ENCODE measurements at regions of chr1 and their contacts with region 1.

Region 1: DNA sequence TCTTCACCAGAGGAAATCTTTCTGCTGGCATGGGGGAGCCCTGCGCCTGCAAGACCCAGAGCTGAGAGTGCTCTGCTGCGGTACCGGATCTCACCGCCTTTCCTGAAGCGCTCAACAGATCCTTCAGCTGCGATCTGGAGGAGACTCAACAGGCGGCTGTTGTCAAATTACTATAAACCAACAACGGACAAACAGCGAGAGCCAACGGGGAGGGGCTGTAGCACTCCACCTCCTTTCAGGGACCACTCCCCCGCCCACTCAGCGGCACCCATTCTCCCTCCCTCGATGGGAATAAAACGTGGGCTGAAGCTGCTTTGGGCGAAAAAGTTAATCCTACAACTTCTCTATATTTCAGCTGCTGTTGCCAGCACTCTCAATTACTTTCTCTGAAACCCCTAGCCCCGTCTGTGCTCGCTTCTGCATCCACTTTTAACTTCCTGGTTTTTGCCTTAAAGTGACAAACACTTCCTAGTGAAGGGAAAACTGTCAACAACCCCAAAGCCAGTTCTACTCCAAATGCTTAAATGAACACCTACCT is at the start of gene FMO5:
- DNase-seq: peak; percentile 55
- H3K4me3 Mint-ChIP-seq: peak within 1 kb of the TSS; percentile 78
- H3K27ac Mint-ChIP-seq: peak within 1 kb of the TSS; percentile 94
- H3K4me1 Mint-ChIP-seq: peaks cover 10% of the 10 kb centered on the region
- H3K27me3 Mint-ChIP-seq: no peaks in the 10 kb centered on the region
- CTCF ChIP-seq: no peak
- total RNA-seq, gene FMO5: 0.72 and 0.86 TPM in 2 replicates

Region 2: DNA sequence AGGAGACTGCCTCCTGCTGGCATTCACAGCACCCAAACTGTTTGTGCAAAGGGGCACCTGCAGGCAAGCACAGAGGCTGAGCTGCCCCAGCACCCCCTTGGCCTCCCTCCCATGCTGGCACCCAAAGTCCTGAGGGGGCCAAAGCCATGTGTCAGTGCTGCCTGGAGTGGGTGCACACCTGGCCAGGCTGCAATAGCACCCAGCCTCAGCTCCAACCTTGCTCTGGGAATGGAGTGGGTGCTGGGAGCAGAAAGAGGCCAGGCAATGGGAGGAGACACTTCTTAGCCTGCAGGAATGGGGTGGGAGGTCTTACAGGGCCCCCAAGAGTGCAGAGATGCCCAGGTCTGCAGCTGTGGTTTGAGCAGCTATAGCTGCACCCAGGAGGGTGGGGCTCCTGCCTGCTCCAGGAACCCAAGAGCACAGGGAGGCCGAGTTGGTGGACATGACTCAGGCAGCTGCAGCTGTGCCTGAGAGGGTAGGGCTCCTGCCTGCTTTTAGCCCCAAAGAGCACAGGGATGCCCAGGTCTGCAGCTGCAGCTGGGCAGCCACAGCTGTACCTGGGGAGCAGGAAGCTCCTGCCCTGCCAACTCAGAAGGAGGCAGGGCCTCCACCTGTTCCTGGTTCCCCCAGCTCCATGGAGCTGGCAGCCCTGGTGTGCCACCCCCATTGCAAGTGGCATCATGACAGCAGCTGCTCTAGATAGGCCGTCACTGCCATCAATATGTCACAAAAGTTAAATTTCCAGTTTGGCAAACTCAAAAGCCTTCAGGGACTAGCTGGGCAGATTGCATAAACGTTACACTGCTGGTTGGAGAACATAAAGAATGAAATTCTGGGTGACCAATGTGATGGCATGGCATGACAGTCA is 11.9 kb after region 1 on chr1:
- CTCF ChIA-PET with region 1: interaction called, 22 read pairs
- POLR2A ChIA-PET with region 1: interaction called, 31 read pairs
- intact Hi-C with region 1: no loop called
- DNase-seq: peak; percentile 23
- H3K4me3 Mint-ChIP-seq: no peak overlapping the region
- H3K27ac Mint-ChIP-seq: no peak overlapping the region
- H3K4me1 Mint-ChIP-seq: peaks cover 11% of the 10 kb centered on the region
- H3K27me3 Mint-ChIP-seq: no peaks in the 10 kb centered on the region
- CTCF ChIP-seq: no peak

Region 3: DNA sequence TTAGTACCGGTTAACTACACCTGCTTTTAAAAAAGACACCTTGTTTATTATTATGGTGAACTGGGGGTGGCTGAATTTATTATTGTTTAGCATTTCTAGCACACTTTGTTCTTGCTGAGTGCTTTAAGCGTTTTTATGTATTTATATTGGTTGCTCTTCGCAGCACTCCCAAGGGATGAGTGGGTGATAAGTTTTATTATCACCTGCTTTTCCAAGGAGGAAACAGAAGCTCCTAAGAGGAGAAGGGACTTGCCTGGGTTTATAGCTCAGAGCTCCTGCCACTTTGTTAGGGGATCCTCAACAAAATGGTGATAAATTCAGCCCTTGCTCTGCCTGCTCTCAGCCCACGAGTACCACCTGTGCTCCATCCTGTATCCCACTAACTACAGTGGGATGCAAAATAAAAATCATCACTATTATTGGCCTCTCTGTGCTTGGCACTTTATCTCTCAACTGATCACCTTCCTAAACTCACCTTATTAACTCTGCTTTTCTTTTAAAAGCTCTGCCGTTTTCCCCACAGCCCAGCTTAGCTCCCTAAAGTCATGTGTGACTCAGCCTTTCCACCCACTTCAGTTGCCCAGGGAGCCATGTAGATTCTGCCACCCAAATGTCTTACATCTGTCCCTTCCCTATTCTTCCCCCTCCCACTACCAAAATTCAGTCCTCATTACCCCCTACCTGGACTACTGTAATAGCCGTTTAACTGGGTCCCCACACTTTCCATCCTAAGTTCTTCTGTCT is 360.6 kb after region 1 on chr1:
- CTCF ChIA-PET with region 1: no interaction called
- POLR2A ChIA-PET with region 1: no interaction called
- intact Hi-C with region 1: no loop called
- DNase-seq: no peak
- H3K4me3 Mint-ChIP-seq: no peak overlapping the region
- H3K27ac Mint-ChIP-seq: no peak overlapping the region
- H3K4me1 Mint-ChIP-seq: no peaks in the 10 kb centered on the region
- H3K27me3 Mint-ChIP-seq: peaks cover 58% of the 10 kb centered on the region
- CTCF ChIP-seq: no peak

Measured in MCF 10A (cell line).